WTC11 (cell line): ENCODE measurements at regions of chr22 and their contacts with region 1.

Region 1: DNA sequence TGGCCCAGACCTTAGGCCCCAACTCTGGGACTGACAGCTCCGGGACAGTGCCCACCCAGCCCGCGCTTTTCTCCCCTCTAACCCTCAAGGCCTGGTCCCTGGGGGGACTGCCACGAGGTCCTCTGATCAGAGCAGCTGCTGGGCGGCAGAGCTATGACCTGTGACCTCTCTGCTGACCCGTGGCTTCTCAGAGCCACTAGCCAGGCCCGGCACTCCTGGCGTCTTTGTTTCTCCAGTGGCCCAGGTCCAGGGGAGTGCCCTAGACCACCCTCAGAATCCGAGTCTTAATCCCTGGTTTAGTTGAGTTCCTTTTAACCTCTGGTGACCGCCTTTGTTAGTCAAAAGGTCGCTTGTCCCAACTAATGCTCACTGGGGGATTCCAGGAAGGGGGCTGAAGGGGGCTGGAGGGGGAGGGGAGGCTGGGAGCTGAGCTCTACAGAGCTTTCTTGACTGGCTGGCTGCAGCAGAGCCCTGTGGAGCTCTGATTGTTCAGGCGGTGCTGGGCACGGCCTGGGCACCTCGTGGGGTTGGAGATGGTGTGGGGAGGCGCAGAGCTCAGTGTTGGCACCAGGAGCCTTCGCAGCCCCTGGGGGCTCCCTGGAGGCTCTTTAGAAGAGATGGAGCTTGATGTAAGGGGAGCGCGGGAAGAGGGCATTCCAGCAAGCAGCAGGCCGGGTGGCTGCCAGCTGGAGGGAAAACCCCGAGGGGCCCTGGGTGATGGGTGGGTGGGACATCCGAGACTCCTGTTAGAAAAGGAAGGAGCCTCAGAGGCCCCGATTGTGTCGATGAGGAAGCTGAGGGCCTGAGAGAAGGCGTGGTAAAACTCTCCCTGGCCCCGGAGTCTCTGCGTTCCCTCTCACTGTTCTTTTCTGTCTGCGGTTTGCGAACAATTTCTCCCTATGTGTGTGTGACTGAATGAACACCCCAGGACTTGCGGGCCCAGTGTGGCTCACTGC is 1.4 kb downstream of the FBLN1 start:
- DNase-seq: peak; percentile 46
- ATAC-seq: peak; percentile 27
- H3K4me3 Mint-ChIP-seq: peak overlapping the region; percentile 89
- H3K27ac Mint-ChIP-seq: peak overlapping the region; percentile 98
- H3K4me1 Mint-ChIP-seq: peaks cover 55% of the 10 kb centered on the region
- H3K27me3 Mint-ChIP-seq: no peaks in the 10 kb centered on the region; the same call in 1 of the 2 replicates
- CTCF ChIP-seq: no peak

Region 2: DNA sequence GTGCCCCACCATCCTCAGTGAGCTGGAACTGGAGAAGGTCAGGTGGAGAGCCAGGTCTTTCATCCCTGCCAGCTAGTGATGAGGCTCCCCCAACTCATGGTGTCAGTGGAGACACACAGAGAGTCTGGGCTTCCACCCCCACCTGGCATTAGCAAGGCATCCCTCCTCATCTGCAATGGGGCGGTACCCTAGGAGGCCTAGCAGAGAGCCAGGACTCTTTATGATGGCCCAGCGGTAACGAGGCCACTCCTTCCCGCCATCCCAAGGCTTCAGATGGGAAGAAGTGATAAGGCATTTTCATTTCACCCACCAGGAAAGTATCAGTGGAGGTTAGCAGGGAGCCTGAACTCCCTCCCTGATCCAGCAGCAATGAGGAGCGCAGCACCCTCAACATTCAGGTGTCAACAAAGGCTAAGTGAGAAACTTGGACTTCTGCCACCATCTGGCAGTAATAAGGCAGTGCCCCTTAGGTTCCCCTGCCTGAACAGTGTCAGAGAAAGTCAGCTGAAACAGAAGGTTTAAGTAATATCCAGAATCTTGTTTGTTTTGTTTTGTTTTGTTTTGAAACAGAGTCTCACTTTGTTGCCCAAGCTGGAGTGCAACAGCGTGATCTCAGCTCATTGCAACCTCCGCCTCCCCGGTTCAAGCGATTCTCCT is 41.9 kb before region 1 on chr22:
- CTCF ChIA-PET with region 1: interaction called, 14 read pairs
- POLR2A ChIA-PET with region 1: no interaction called
- DNase-seq: peak; percentile 21
- ATAC-seq: peak; percentile 91
- H3K4me3 Mint-ChIP-seq: no peak overlapping the region
- H3K27ac Mint-ChIP-seq: no peak overlapping the region
- H3K4me1 Mint-ChIP-seq: 0 out of 2 replicates have a peak, but pooled peaks cover 2% of the 10 kb centered on the region
- H3K27me3 Mint-ChIP-seq: no peaks in the 10 kb centered on the region
- CTCF ChIP-seq: no peak

Region 3: GRCh38 chr22:45481666-45482065 is 22.4 kb before region 1 on chr22:
- CTCF ChIA-PET with region 1: no interaction called
- POLR2A ChIA-PET with region 1: no interaction called
- DNase-seq: no peak
- ATAC-seq: no peak
- H3K4me3 Mint-ChIP-seq: no peak overlapping the region
- H3K27ac Mint-ChIP-seq: no peak overlapping the region
- H3K4me1 Mint-ChIP-seq: 0 out of 2 replicates have a peak, but pooled peaks cover 3% of the 10 kb centered on the region
- H3K27me3 Mint-ChIP-seq: peaks cover 9% of the 10 kb centered on the region
- CTCF ChIP-seq: no peak

Region 4: GRCh38 chr22:45553351-45554039 is 49.4 kb after region 1 on chr22:
- CTCF ChIA-PET with region 1: interaction called, 11 read pairs
- POLR2A ChIA-PET with region 1: no interaction called
- DNase-seq: peak; percentile 87
- ATAC-seq: peak; percentile 75
- H3K4me3 Mint-ChIP-seq: no peak overlapping the region
- H3K27ac Mint-ChIP-seq: peak overlapping the region; percentile 42; the same call in 1 of the 2 replicates
- H3K4me1 Mint-ChIP-seq: peaks cover 10% of the 10 kb centered on the region
- H3K27me3 Mint-ChIP-seq: no peaks in the 10 kb centered on the region
- CTCF ChIP-seq: peak; percentile 88

Region 5: GRCh38 chr22:45671768-45672563 is 167.9 kb after region 1 on chr22 and contains the start of gene ATXN10:
- CTCF ChIA-PET with region 1: no interaction called
- POLR2A ChIA-PET with region 1: no interaction called
- DNase-seq: peak; percentile 90
- ATAC-seq: peak; percentile 13
- H3K4me3 Mint-ChIP-seq: peak within 1 kb of the TSS; percentile 92
- H3K27ac Mint-ChIP-seq: no peak within 1 kb of the TSS; the same call in 1 of the 2 replicates
- H3K4me1 Mint-ChIP-seq: peaks cover 22% of the 10 kb centered on the region
- H3K27me3 Mint-ChIP-seq: no peaks in the 10 kb centered on the region; the same call in 1 of the 2 replicates
- CTCF ChIP-seq: no peak
- total RNA-seq, gene ATXN10: 185 to 194 TPM (median 189 TPM) in 3 replicates